BJ (cell line): ENCODE measurements at regions of chr17 and their contacts with region 1.

Region 1: DNA sequence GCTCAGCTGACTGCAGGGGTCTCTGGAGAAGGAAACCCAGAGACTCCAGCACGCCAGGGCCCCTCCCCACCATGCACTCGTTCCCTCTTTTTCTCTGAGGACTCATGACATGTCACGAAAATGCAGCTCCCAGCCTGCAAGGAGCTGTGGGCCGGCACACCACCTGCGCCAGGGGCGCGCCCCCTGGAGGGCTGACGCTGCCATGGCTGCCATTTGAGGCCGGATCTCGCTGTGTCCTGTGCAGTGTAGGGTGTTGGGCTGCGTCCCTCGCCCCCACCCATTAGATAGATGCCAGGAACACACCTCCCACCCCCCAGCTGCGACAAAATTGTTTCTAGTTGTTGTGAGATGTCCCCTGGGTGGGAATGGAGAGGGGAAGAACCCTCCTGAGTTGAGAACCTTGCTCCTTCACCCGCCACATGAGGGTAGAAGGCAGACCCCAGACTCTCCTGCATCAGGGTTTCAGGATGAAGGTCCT is 8.2 kb downstream of the SYNGR2 start:
- DNase-seq: no peak
- H3K4me3 ChIP-seq: no peak overlapping the region
- H3K27me3 ChIP-seq: no peaks in the 10 kb centered on the region
- CTCF ChIP-seq: peak; percentile 93

Region 2: GRCh38 chr17:78112518-78113226 is 63.9 kb before region 1 on chr17:
- CTCF ChIA-PET with region 1: interaction called, 38 read pairs
- POLR2A ChIA-PET with region 1: no interaction called
- DNase-seq: no peak
- H3K4me3 ChIP-seq: no peak overlapping the region
- H3K27me3 ChIP-seq: peaks cover 2% of the 10 kb centered on the region; the same call in 1 of the 2 replicates
- CTCF ChIP-seq: peak; percentile 99

Region 3: GRCh38 chr17:78186692-78187595 is 10.4 kb after region 1 on chr17 and contains the starts of genes AFMID and TK1:
- CTCF ChIA-PET with region 1: interaction called, 35 read pairs
- POLR2A ChIA-PET with region 1: no interaction called
- DNase-seq: peak; percentile 78
- H3K4me3 ChIP-seq: peak within 1 kb of the TSS; percentile 63
- H3K27me3 ChIP-seq: no peaks in the 10 kb centered on the region
- CTCF ChIP-seq: peak; percentile 91
- polyA plus RNA-seq, gene AFMID: 28.0 and 32.1 TPM in 2 replicates
- polyA plus RNA-seq, gene TK1: 62.5 and 130 TPM in 2 replicates

Region 4: DNA sequence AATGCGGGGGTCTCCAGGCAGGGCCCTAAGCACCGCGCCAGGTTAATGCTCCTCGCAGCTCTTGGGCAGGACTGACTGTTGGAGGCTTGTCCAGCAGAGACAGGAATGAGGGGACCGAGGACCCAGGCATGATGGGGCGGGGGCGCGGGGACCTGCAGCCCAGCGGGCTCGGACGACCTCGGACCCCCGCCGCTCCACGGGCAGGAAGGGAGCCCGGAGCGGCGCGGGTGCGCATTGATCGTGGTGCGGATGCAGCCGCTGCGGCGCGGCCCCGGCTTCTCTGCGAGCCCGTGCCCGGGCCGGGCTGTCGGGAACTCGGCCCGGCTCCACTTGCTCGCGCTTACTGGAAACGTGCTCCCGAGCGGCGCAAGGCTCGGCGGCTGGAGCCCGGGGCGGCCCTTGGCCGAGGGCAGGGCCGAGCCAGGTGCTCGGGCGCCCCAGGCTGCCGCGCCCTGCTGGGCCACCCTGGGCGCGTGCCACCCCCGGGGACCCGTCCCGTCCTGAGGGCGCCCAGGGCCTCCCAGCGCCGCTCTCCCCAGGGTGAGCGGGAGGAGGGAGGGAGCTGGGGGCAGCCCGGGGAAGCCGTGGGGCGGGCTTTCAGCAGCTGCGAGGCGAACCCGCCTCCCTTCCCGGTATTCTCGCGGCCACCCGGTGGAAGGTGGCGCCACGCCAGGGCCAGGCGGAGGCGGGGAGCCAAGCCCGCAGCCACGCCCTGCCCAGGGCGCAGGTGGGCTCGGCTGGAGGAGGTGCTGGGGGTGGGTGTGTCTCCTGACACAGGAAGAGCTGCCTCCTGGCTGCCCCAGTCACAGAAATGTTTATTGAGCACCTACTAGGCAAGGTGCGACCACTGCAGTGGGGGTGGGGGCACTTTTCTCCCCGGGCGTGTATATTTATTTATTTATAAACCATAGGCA is 137.4 kb after region 1 on chr17:
- CTCF ChIA-PET with region 1: no interaction called
- POLR2A ChIA-PET with region 1: no interaction called
- DNase-seq: no peak
- H3K4me3 ChIP-seq: peak overlapping the region; percentile 34
- H3K27me3 ChIP-seq: no peaks in the 10 kb centered on the region
- CTCF ChIP-seq: no peak